IMR-90 (cell line): ENCODE measurements at regions of chr14 and their contacts with region 1.

Region 1: DNA sequence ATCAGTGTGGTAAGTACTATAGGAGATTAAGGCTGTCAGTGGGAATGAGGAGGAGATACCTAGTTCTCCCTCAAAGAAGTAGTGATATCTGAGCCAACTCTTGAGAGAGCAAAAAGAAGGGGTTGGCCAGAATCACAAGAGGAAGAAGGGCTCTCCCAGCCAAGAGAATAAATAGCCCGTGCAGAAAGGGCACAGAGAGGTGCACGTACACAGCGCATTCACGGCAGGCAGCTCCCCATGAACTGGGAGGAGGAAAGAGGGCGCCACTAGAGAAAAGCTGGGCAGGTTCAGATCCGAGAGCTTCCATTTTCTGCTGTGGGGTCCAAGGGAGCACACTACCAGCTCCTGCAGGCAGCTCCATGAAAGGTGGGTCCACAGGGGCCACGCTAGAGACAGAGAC is 59.9 kb downstream of the PPP2R5E start:
- DNase-seq: no peak
- ATAC-seq: no peak
- H3K4me3 ChIP-seq: no peak overlapping the region
- H3K27ac ChIP-seq: no peak overlapping the region
- H3K4me1 ChIP-seq: peaks cover 9% of the 10 kb centered on the region
- H3K27me3 ChIP-seq: no peaks in the 10 kb centered on the region
- CTCF ChIP-seq: no peak
- POLR2A ChIP-seq: no peak
- RAD21 ChIP-seq: no peak

Region 2: GRCh38 chr14:63457498-63457897 is 25.8 kb before region 1 on chr14:
- CTCF ChIA-PET with region 1: no interaction called
- POLR2A ChIA-PET with region 1: no interaction called
- dilution Hi-C with region 1: no loop called
- in situ Hi-C with region 1: no loop called
- intact Hi-C with region 1: no loop called
- DNase-seq: no peak
- ATAC-seq: no peak
- H3K4me3 ChIP-seq: no peak overlapping the region
- H3K27ac ChIP-seq: no peak overlapping the region
- H3K4me1 ChIP-seq: peaks cover 3% of the 10 kb centered on the region
- H3K27me3 ChIP-seq: no peaks in the 10 kb centered on the region
- CTCF ChIP-seq: no peak
- POLR2A ChIP-seq: no peak
- RAD21 ChIP-seq: no peak

Region 3: GRCh38 chr14:63512861-63513260 is 29.5 kb after region 1 on chr14:
- CTCF ChIA-PET with region 1: interaction called, 12 read pairs
- POLR2A ChIA-PET with region 1: interaction called, 3 read pairs
- dilution Hi-C with region 1: no loop called
- in situ Hi-C with region 1: no loop called
- intact Hi-C with region 1: no loop called
- DNase-seq: peak; percentile 2
- ATAC-seq: no peak; the same call in 1 of the 2 replicates
- H3K4me3 ChIP-seq: no peak overlapping the region
- H3K27ac ChIP-seq: no peak overlapping the region
- H3K4me1 ChIP-seq: peaks cover 13% of the 10 kb centered on the region
- H3K27me3 ChIP-seq: no peaks in the 10 kb centered on the region
- CTCF ChIP-seq: no peak
- POLR2A ChIP-seq: no peak
- RAD21 ChIP-seq: no peak